Right ventricle myocardium inferior (tissue), 1 donor: ENCODE measurements at regions of chr1 and their contacts with region 1.

Region 1: DNA sequence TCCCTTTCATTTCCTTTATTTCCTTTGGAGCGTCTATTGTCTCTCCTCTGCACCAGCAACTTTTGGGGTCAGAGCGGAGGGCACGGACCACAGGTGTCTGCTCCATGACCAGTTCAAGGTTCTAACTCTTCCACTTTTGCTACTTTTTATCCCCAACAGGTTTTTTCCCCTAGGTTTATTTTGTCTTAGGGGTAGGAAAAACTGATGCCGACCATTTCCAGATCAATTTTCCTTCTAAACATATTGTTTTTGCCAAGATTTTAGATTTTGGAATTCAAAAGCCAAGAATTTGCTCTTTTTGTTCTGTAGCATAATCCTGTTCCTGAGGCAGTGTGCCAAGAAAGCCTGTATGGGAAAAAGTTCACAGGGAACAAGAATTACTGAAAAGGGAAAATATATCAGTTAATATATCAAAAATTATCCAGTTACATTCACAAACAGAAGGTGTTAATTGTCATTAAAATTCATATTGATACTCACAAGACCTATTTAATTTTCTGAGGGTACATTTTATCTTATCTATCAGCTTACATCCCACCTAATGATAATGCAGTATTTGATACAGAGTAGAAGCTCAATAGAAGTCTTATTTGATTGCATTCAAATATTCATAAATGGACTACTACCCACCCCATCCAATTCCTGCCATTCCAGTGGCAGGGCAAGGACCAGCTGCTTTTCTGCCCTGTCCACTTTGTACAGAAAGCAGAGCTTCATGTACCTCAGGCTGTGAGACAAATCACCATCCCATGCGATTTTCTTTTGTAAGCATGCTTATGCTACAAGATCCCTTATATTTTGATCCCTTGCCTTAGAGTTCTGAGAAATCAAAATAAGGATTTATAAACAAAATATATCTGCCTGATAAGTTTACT is 31.2 kb downstream of the TSEN15 start:
- DNase-seq: no peak
- ATAC-seq: no peak

Region 2: GRCh38 chr1:184152434-184152898 is 69.7 kb after region 1 on chr1:
- intact Hi-C with region 1: loop called (anchors 5 kb)
- DNase-seq: no peak
- ATAC-seq: peak; percentile 65

Region 3: GRCh38 chr1:184191181-184191621 is 108.4 kb after region 1 on chr1:
- intact Hi-C with region 1: no loop called
- DNase-seq: peak; percentile 82
- ATAC-seq: peak; percentile 80